PC-9 (cell line): ENCODE measurements at regions of chr20 and their contacts with region 1.

Region 1: GRCh38 chr20:38221119-38221589 is 39.4 kb downstream of the KIAA1755 start:
- DNase-seq: peak; percentile 66 to 90
- H3K4me3 ChIP-seq: no peak overlapping the region
- H3K27ac ChIP-seq: no peak overlapping the region
- H3K4me1 ChIP-seq: peaks cover 22% of the 10 kb centered on the region
- H3K27me3 ChIP-seq: no peaks in the 10 kb centered on the region
- CTCF ChIP-seq: peak; percentile 97

Region 2: DNA sequence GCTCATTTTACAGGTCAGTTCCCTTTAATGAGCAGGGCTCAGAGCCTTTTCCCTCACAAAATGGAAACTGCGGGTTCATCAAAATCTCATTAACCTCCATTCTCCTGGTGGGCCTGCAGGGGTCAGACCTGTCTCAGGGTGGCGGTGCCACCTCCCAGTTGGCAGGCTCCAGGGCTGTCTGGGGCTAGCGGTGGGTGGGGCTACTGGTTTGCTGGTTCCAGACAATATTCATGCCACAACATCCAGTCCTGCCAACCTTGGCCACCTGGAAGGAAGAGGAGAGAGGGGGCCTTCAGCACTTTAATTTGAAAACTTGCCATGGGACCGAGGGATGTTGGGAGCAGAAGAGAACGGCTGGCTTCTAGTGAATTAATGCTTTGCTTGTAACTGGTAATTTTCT is 569.2 kb before region 1 on chr20:
- CTCF ChIA-PET with region 1: no interaction called
- POLR2A ChIA-PET with region 1: no interaction called
- intact Hi-C with region 1: loop called (anchors 2 kb)
- DNase-seq: peak in 1 of 2 experiments; percentile 68
- H3K4me3 ChIP-seq: no peak overlapping the region
- H3K27ac ChIP-seq: no peak overlapping the region
- H3K4me1 ChIP-seq: no peaks in the 10 kb centered on the region
- H3K27me3 ChIP-seq: peaks cover 6% of the 10 kb centered on the region
- CTCF ChIP-seq: peak; percentile 67

Region 3: GRCh38 chr20:38023181-38024001 is 197.8 kb before region 1 on chr20:
- CTCF ChIA-PET with region 1: no interaction called
- POLR2A ChIA-PET with region 1: no interaction called
- intact Hi-C with region 1: no loop called
- DNase-seq: no peak
- H3K4me3 ChIP-seq: no peak overlapping the region
- H3K27ac ChIP-seq: no peak overlapping the region
- H3K4me1 ChIP-seq: no peaks in the 10 kb centered on the region
- H3K27me3 ChIP-seq: no peaks in the 10 kb centered on the region
- CTCF ChIP-seq: no peak

Region 4: GRCh38 chr20:38057351-38057972 is 163.7 kb before region 1 on chr20:
- CTCF ChIA-PET with region 1: interaction called, 29 read pairs
- POLR2A ChIA-PET with region 1: no interaction called
- intact Hi-C with region 1: loop called (anchors 1 kb)
- DNase-seq: peak; percentile 53 to 76
- H3K4me3 ChIP-seq: no peak overlapping the region
- H3K27ac ChIP-seq: no peak overlapping the region
- H3K4me1 ChIP-seq: no peaks in the 10 kb centered on the region
- H3K27me3 ChIP-seq: no peaks in the 10 kb centered on the region
- CTCF ChIP-seq: peak; percentile 99

Region 5: DNA sequence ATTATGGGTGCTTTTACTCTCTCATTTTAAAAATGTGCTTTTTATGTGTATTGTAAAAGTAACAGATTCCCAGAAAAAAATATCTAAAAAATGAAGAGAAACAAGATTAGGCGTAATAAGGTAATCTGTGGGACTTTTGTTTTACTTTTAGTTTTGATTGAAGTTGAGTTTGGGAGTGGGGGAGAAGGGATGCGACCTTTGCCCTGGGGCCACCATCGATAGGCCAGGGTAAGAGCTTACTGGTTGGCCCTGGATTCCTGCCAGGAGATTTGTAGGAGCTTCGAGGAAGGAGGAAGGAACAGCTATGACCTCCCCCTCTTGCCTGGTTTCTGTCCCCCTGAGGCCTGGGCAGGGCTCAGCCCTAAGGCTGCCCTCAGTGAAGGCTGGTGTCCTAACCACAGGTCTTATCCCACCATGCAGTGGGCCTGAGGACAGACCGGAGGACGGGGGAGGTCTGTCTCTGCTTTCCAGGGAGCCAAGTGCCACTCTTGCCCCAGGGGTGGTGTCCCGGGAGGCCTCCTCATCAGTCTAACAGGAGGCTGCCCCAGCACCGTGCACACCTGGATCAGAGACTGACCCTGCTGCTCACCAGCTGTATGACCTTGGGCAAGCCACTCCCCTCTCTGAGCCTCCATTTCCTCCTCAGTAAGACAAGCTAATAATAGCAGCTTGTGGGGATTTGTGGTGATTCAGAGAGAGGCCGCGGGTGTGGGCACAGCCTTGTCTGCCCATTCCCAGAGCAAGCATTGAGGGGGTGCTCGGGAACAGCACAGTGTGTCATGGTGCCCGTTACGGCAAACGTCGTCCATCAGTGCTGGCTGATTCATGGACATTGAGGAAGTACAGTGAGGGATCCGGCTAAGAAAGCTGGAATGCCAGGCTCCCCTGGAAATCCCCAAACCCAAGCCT is 77.3 kb before region 1 on chr20:
- CTCF ChIA-PET with region 1: interaction called, 6 read pairs
- POLR2A ChIA-PET with region 1: interaction called, 6 read pairs
- intact Hi-C with region 1: loop called (anchors 2 kb)
- DNase-seq: peak; percentile 89 to 99
- H3K4me3 ChIP-seq: no peak overlapping the region; the same call in 1 of the 2 replicates
- H3K27ac ChIP-seq: peak overlapping the region; percentile 97
- H3K4me1 ChIP-seq: peaks cover 56% of the 10 kb centered on the region
- H3K27me3 ChIP-seq: no peaks in the 10 kb centered on the region
- CTCF ChIP-seq: no peak

Region 6: DNA sequence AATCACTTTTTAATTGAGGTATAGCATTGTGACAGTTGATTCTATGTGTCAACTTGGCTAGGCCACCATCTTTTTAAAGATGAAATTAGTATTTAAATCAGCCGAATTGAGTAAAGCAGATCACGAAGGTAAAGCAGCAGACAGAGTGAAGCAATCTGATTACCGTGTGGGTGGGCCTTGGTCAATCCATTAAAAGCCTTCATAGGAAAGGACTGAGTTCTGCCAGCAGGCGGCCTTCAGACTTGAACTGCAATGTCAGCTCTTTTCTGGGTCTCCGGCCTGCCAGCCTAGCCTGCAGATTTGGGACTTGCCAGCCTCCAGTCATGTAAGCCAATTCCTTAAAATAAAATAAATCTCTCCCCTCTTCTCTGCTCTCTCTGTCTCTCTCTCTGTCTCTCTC is 33.6 kb before region 1 on chr20:
- CTCF ChIA-PET with region 1: no interaction called
- POLR2A ChIA-PET with region 1: interaction called, 3 read pairs
- intact Hi-C with region 1: loop called (anchors 1 kb)
- DNase-seq: no peak
- H3K4me3 ChIP-seq: no peak overlapping the region
- H3K27ac ChIP-seq: peak overlapping the region; percentile 86
- H3K4me1 ChIP-seq: peaks cover 64% of the 10 kb centered on the region
- H3K27me3 ChIP-seq: no peaks in the 10 kb centered on the region
- CTCF ChIP-seq: no peak

Region 7: DNA sequence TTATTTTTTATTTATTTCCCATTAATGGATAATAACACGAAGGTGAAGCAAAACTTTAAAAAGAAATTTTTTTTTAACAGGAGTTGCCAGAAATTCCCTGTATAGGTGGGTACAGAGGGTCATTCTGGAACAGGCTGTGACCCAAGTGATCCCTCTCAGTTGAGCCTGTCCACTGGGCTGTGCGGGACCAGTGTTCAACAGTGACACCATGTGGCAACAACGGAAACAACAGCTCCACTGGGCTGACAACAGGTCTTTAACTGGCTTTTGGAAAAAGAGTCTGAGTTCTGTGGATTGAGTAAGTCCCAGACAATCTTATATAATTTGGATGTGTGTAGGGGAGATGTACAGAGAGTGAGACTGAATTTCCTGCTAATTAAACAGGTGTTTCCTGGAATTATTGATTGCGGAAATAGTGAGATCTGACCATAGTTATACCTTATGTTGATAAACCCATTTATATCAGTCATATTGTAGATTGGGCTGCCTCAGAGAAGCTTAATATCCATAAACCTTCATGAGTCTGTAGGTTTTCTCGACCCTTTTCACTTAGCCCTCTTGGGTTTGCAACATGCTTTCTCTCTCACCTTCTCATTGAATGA is 21.8 kb after region 1 on chr20:
- CTCF ChIA-PET with region 1: no interaction called
- POLR2A ChIA-PET with region 1: no interaction called
- intact Hi-C with region 1: no loop called
- DNase-seq: peak; percentile 31 to 35
- H3K4me3 ChIP-seq: no peak overlapping the region
- H3K27ac ChIP-seq: no peak overlapping the region
- H3K4me1 ChIP-seq: no peaks in the 10 kb centered on the region
- H3K27me3 ChIP-seq: peaks cover 21% of the 10 kb centered on the region
- CTCF ChIP-seq: peak; percentile 89

Region 8: GRCh38 chr20:38290832-38291581 is 69.9 kb after region 1 on chr20:
- CTCF ChIA-PET with region 1: no interaction called
- POLR2A ChIA-PET with region 1: no interaction called
- intact Hi-C with region 1: no loop called
- DNase-seq: peak; percentile 53 to 66
- H3K4me3 ChIP-seq: peak overlapping the region; percentile 20; the same call in 1 of the 2 replicates
- H3K27ac ChIP-seq: no peak overlapping the region
- H3K4me1 ChIP-seq: peaks cover 9% of the 10 kb centered on the region; the same call in 1 of the 2 replicates
- H3K27me3 ChIP-seq: no peaks in the 10 kb centered on the region
- CTCF ChIP-seq: peak; percentile 72

Region 9: GRCh38 chr20:38412877-38413577 is 191.9 kb after region 1 on chr20:
- CTCF ChIA-PET with region 1: interaction called, 5 read pairs
- POLR2A ChIA-PET with region 1: no interaction called
- intact Hi-C with region 1: loop called (anchors 2 kb)
- DNase-seq: no peak
- H3K4me3 ChIP-seq: no peak overlapping the region
- H3K27ac ChIP-seq: no peak overlapping the region
- H3K4me1 ChIP-seq: no peaks in the 10 kb centered on the region
- H3K27me3 ChIP-seq: no peaks in the 10 kb centered on the region
- CTCF ChIP-seq: no peak

Region 10: DNA sequence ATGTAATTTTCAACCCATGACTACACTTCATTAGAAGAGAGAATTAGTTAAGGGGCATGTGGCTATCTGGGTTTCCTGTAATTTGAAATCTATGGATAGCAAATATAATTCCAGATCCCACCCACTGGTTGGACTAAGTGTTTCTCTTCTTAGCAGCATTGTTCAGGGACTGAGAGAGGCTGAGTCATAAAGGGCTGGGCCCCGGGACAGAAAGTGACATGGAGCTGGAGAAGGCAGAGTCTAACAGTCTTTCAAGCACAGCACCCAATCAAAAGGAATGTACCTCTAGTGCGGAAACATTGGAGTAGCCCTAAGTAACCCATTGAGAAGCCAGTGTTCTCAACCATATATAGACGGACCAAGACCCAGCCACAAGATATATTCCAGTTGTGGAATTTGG is 1104.9 kb after region 1 on chr20:
- CTCF ChIA-PET with region 1: no interaction called
- POLR2A ChIA-PET with region 1: no interaction called
- intact Hi-C with region 1: no loop called
- DNase-seq: no peak
- H3K4me3 ChIP-seq: no peak overlapping the region
- H3K27ac ChIP-seq: no peak overlapping the region
- H3K4me1 ChIP-seq: no peaks in the 10 kb centered on the region
- H3K27me3 ChIP-seq: peaks cover 21% of the 10 kb centered on the region; the same call in 1 of the 2 replicates
- CTCF ChIP-seq: no peak